ENCODE measurements at regions of chr6 and their contacts with region 1.

Region 1: DNA sequence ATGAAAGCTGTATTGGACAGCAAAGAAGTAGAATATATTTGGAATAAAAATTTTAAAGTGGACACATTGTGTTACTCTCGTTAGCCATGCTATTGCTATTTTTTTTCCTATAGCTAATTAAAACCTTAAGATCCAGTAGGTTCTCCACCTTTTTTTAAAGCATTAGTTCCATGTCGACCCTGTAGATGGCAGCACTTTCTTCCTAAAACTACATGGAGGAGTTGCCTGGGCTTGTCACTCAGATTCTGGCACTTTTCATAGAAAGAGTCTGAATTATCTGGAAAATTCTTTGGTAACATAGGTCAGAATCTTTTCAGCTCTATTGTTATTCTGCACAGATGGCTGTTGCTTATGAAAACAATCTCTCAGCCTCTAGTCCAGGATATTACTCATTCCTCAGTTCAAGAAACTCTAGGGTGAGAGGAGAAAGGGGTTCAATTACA is 42.0 kb upstream of the ESR1 start:
- DNase-seq: peak; percentile 98
- H3K4me3 ChIP-seq: no peak overlapping the region
- H3K27ac ChIP-seq: peak overlapping the region; percentile 74
- H3K4me1 ChIP-seq: peaks cover 22% of the 10 kb centered on the region
- H3K27me3 ChIP-seq: no peaks in the 10 kb centered on the region
- CTCF ChIP-seq: peak; percentile 50 to 59
- POLR2A ChIP-seq: no peak

Region 2: DNA sequence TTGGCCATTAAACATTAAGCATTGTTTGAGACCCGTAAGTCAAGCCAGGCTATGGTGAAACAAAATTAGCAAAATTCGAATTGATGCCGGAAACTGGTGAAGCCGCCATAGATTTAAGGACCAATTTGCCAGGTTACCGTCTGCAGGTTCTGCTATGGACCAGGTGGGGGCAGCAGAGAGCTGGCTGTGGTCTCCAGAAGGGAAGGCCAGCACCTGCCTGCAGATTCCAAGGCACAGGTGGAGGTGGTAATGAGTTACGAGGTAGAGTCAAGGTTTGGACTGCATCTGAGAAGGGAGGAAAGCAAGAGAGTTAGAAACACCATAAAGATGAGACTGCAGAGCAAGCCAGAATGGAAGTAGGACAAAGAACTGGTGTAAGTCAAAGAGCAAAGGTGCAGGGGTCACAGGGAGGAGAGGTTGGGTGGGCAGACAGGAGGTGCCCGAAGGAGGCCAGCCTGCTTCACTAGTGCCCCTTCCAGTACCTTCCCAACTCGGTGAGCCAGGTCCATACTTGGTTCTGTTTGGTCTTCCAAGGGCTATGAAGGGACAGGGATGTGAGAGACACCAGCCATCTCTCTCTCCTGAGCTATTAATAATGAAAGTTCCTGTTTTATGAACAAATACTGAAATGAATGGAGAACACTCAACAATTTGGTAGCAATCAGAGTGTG is 89.6 kb before region 1 on chr6:
- CTCF ChIA-PET with region 1: interaction called, 8 read pairs
- POLR2A ChIA-PET with region 1: no interaction called
- dilution Hi-C with region 1: no loop called
- intact Hi-C with region 1: loop called (anchors 2 kb)
- DNase-seq: peak; percentile 46
- H3K4me3 ChIP-seq: peak overlapping the region in 1 of 3 experiments; percentile 3
- H3K27ac ChIP-seq: no peak overlapping the region
- H3K4me1 ChIP-seq: peaks cover 8% of the 10 kb centered on the region
- H3K27me3 ChIP-seq: peaks cover 0 to 1% of the 10 kb centered on the region in 2 experiments
- CTCF ChIP-seq: peak; percentile 92
- POLR2A ChIP-seq: no peak

Region 3: GRCh38 chr6:151733680-151734320 is 31.7 kb before region 1 on chr6:
- CTCF ChIA-PET with region 1: no interaction called
- POLR2A ChIA-PET with region 1: no interaction called
- dilution Hi-C with region 1: no loop called
- intact Hi-C with region 1: no loop called
- DNase-seq: peak; percentile 15
- H3K4me3 ChIP-seq: no peak overlapping the region
- H3K27ac ChIP-seq: no peak overlapping the region
- H3K4me1 ChIP-seq: no peaks in the 10 kb centered on the region
- H3K27me3 ChIP-seq: no peaks in the 10 kb centered on the region
- CTCF ChIP-seq: no peak
- POLR2A ChIP-seq: no peak

Region 4: DNA sequence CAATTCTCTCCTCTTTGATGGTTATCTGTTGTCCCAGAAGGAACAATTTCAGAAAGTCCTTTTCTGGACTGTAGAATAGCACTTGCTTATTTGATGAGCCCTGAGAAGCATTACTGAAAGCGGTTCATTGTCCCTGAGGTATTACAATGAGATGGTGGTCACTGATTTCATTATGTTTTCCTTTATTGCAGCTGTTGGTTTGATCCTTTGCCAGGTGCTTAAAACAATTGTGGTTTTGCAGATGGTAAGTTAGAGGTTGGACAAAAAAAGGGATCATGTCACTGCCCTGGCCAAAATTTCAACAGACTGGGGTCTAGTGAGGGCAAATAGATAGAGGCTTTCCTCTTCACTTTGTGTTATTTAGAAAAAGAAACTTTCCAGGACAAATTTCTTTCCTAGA is 103.9 kb after region 1 on chr6:
- CTCF ChIA-PET with region 1: no interaction called
- POLR2A ChIA-PET with region 1: no interaction called
- dilution Hi-C with region 1: no loop called
- intact Hi-C with region 1: no loop called
- DNase-seq: peak; percentile 2
- H3K4me3 ChIP-seq: no peak overlapping the region
- H3K27ac ChIP-seq: no peak overlapping the region
- H3K4me1 ChIP-seq: no peaks in the 10 kb centered on the region
- H3K27me3 ChIP-seq: no peaks in the 10 kb centered on the region
- CTCF ChIP-seq: no peak
- POLR2A ChIP-seq: no peak

Region 5: DNA sequence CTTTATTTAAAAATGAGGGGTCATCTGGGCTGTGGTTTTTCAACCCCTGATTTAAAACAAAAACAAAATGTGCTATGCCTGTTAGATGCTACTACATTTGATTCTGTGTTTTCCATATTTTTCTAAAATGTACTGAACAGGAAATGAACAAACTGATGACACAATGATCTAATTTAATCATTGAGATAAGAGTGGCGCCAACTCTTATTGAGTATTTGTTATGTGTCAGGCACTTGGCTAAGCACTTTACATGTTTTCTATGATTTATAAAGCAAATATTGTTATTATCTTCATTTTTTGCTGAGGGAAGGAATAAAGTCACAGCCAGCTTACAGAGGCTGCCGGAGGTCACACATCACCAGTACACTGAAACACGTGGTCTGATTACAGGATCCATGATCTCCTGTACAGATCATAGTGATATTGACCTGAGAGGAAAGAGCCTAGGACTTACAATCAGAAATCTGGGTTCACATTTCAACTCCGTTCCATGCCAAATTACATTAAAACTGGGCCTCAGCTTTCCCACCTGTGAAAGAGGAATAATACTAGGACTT is 208.7 kb after region 1 on chr6:
- CTCF ChIA-PET with region 1: interaction called, 3 read pairs
- POLR2A ChIA-PET with region 1: no interaction called
- dilution Hi-C with region 1: no loop called
- intact Hi-C with region 1: loop called (anchors 5 kb)
- DNase-seq: peak; percentile 56
- H3K4me3 ChIP-seq: no peak overlapping the region
- H3K27ac ChIP-seq: peak overlapping the region; percentile 9
- H3K4me1 ChIP-seq: peaks cover 16% of the 10 kb centered on the region
- H3K27me3 ChIP-seq: no peaks in the 10 kb centered on the region
- CTCF ChIP-seq: no peak
- POLR2A ChIP-seq: no peak

Region 6: DNA sequence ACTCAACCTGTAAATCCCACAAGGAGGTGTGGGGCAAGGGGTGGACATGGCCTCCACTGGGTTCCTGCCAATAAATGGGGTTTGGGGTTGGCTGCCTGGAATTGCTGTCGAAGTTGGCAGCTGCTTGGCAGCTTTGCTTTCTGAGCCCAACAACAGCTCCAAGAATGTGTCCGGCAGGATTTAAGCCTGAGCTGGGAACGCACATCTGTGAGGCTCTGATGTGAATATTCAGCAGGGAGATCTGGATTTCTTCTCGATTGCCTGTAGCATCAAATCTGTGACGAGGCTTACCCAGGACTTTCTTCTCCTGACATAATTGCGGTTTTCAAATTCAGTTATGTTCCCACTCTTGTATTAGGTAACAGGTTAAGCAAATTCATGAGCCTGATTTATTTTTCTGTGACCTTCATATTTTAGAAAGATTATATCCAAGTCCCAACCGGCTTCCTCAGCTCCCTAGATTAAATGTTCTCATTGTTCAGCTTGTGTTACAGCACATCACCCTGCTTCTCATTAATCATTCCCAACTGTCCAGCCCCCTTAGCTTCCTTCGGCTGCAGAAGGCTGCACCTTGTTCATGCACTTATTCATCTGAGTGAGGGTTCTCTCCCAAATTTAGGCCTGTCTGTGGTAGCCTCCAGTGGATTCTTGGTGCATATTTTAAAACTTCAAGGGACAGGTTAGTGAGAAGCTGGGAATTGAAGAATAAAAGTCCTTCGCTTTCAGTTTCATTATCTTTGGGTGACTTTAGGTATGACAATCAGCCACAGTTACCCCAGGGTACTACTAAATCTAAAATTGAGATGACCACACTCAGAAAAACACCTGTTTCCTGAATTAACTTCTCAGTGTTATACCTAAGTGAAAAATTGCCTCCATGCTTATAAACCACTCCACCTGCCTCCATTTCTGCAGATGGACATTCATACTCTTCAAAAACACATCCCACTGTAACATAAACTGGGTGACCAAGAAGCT is 352.0 kb after region 1 on chr6:
- CTCF ChIA-PET with region 1: interaction called, 12 read pairs
- POLR2A ChIA-PET with region 1: interaction called, 5 read pairs
- dilution Hi-C with region 1: no loop called
- intact Hi-C with region 1: no loop called
- DNase-seq: no peak
- H3K4me3 ChIP-seq: no peak overlapping the region
- H3K27ac ChIP-seq: no peak overlapping the region
- H3K4me1 ChIP-seq: peaks cover 3% of the 10 kb centered on the region
- H3K27me3 ChIP-seq: no peaks in the 10 kb centered on the region
- CTCF ChIP-seq: no peak
- POLR2A ChIP-seq: no peak

Region 7: GRCh38 chr6:152184917-152185574 is 419.6 kb after region 1 on chr6:
- CTCF ChIA-PET with region 1: no interaction called
- POLR2A ChIA-PET with region 1: no interaction called
- dilution Hi-C with region 1: no loop called
- intact Hi-C with region 1: no loop called
- DNase-seq: no peak
- H3K4me3 ChIP-seq: no peak overlapping the region
- H3K27ac ChIP-seq: no peak overlapping the region
- H3K4me1 ChIP-seq: no peaks in the 10 kb centered on the region
- H3K27me3 ChIP-seq: no peaks in the 10 kb centered on the region
- CTCF ChIP-seq: no peak
- POLR2A ChIP-seq: no peak

Region 8: DNA sequence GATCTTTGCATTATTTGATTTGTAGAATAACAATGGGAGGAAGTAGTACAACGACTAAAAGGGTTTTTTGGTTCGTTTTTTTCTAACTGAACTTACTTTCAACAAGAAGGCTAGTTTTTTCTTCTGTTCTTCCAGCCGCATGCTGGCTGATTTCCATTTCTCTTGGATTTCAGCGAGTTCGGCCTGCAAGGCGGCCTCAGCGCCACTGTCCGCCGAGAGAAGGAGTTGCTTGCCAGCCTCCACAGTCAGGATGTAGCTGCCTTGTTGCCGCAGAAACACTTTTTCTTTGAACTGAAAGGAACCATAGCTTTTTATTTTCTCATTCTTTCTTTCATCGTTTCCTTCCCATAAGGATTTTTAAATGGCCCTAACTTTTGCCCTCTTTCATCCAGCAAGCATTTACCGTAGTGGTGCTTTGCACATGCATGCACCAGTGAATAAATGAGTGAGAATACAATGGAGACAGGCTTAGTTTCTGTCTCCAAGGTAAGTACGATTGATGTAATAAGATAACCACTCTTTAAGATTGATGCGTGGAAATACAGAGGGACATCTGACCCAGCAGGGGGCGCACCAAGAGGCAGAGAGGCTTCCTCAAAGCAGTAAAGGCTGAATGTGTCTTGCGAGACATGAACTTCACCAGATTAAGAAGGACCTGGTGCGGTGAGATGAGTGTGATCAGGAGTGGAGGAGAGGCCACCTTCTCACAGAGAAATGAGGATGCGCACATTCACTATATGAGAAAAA is 440.8 kb after region 1 on chr6:
- CTCF ChIA-PET with region 1: interaction called, 3 read pairs
- POLR2A ChIA-PET with region 1: no interaction called
- dilution Hi-C with region 1: no loop called
- intact Hi-C with region 1: loop called (anchors 1 kb)
- DNase-seq: peak; percentile 37
- H3K4me3 ChIP-seq: no peak overlapping the region
- H3K27ac ChIP-seq: no peak overlapping the region
- H3K4me1 ChIP-seq: no peaks in the 10 kb centered on the region
- H3K27me3 ChIP-seq: no peaks in the 10 kb centered on the region
- CTCF ChIP-seq: peak; percentile 17 to 48
- POLR2A ChIP-seq: no peak

Region 9: GRCh38 chr6:152356451-152357061 is 591.1 kb after region 1 on chr6:
- CTCF ChIA-PET with region 1: interaction called, 9 read pairs
- POLR2A ChIA-PET with region 1: no interaction called
- dilution Hi-C with region 1: no loop called
- intact Hi-C with region 1: loop called (anchors 1 kb)
- DNase-seq: peak; percentile 54
- H3K4me3 ChIP-seq: no peak overlapping the region
- H3K27ac ChIP-seq: no peak overlapping the region
- H3K4me1 ChIP-seq: no peaks in the 10 kb centered on the region
- H3K27me3 ChIP-seq: no peaks in the 10 kb centered on the region
- CTCF ChIP-seq: peak in 1 of 2 donors; percentile 29
- POLR2A ChIP-seq: no peak